ENCODE measurements at regions of chr5 and their contacts with region 1.

Region 1: GRCh38 chr5:157718519-157718918 is 12.7 kb upstream of the THG1L start:
- DNase-seq: peak; percentile 92
- ATAC-seq: peak; percentile 97
- H3K4me3 ChIP-seq: no peak overlapping the region
- H3K27ac ChIP-seq: peak overlapping the region; percentile 58
- H3K4me1 ChIP-seq: peaks cover 20% of the 10 kb centered on the region
- H3K27me3 ChIP-seq: no peaks in the 10 kb centered on the region
- CTCF ChIP-seq: peak; percentile 90

Region 2: DNA sequence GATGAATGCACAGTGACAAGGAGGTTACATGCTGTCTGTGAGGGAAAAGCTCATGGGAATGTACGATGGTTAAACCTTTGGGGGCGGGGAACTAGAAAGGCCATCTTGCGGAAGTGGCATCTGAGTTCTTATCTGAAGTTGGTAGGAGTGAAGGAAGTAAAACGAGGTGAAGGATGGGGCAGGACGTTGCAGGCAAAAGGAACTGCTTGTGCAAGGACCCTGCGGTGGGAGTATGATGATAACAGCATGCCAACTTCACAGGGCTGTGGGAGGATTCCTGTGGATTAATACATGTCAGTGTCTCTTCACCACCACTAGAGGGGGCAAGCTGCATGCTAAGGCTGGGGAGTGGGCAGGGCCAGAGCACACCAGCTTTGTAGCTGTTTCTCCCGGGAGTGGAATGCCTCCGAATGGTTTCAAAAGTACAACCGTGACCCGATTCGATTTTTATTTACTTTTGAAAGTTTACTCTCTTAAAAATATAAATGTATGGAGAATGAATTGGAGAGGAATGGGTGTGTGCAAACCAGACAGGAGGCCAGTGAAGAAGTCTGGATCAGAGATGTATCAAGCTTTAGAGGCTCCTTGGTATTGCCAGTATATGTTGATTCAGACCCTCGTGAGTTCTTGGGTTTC is 390.1 kb before region 1 on chr5:
- CTCF ChIA-PET with region 1: interaction called, 8 read pairs
- POLR2A ChIA-PET with region 1: no interaction called
- intact Hi-C with region 1: loop called (anchors 1 kb)
- DNase-seq: peak; percentile 90
- ATAC-seq: peak; percentile 100
- H3K4me3 ChIP-seq: peak overlapping the region; percentile 61
- H3K27ac ChIP-seq: no peak overlapping the region
- H3K4me1 ChIP-seq: peaks cover 13% of the 10 kb centered on the region
- H3K27me3 ChIP-seq: no peaks in the 10 kb centered on the region
- CTCF ChIP-seq: peak; percentile 99

Region 3: GRCh38 chr5:157670662-157671591 is 47.6 kb before region 1 on chr5 and contains the start of gene C5orf52:
- CTCF ChIA-PET with region 1: interaction called, 3 read pairs
- POLR2A ChIA-PET with region 1: no interaction called
- intact Hi-C with region 1: loop called (anchors 1 kb)
- DNase-seq: peak; percentile 96
- ATAC-seq: peak; percentile 58
- H3K4me3 ChIP-seq: peak within 1 kb of the TSS; percentile 64
- H3K27ac ChIP-seq: peak within 1 kb of the TSS; percentile 91
- H3K4me1 ChIP-seq: peaks cover 29% of the 10 kb centered on the region
- H3K27me3 ChIP-seq: no peaks in the 10 kb centered on the region
- CTCF ChIP-seq: no peak
- total RNA-seq, gene C5orf52: 0.84 TPM in 1 of 2 replicates, not detected in the other

Region 4: GRCh38 chr5:157828944-157829632 is 110.6 kb after region 1 on chr5:
- CTCF ChIA-PET with region 1: no interaction called
- POLR2A ChIA-PET with region 1: no interaction called
- intact Hi-C with region 1: no loop called
- DNase-seq: peak; percentile 60
- ATAC-seq: peak; percentile 63
- H3K4me3 ChIP-seq: no peak overlapping the region
- H3K27ac ChIP-seq: no peak overlapping the region
- H3K4me1 ChIP-seq: no peaks in the 10 kb centered on the region
- H3K27me3 ChIP-seq: no peaks in the 10 kb centered on the region
- CTCF ChIP-seq: peak; percentile 71